CD4-positive, alpha-beta memory T cell (primary cell): ENCODE measurements at regions of chr16 and their contacts with region 1.

Region 1: GRCh38 chr16:71961066-71962039 is 38.8 kb downstream of the PKD1L3 start:
- DNase-seq: peak; percentile 69 to 75 (median 70)
- H3K4me3 ChIP-seq: no peak overlapping the region
- H3K4me3 Mint-ChIP-seq: no peak overlapping the region
- H3K27ac ChIP-seq: no peak overlapping the region
- H3K27ac Mint-ChIP-seq: peak overlapping the region in 1 of 7 donors; percentile 43
- H3K4me1 ChIP-seq: peaks cover 5% of the 10 kb centered on the region
- H3K4me1 Mint-ChIP-seq: peaks cover 5 to 9% (median 6%) of the 10 kb centered on the region in 4 donors
- H3K27me3 ChIP-seq: no peaks in the 10 kb centered on the region
- H3K27me3 Mint-ChIP-seq: peaks cover 0 to 3% of the 10 kb centered on the region in 2 donors

Region 2: GRCh38 chr16:71645453-71645852 is 315.9 kb before region 1 on chr16:
- CTCF ChIA-PET with region 1: no interaction called
- POLR2A ChIA-PET with region 1: no interaction called
- intact Hi-C with region 1: no loop called
- DNase-seq: no peak
- H3K4me3 ChIP-seq: no peak overlapping the region
- H3K4me3 Mint-ChIP-seq: no peak overlapping the region
- H3K27ac ChIP-seq: no peak overlapping the region
- H3K27ac Mint-ChIP-seq: no peak overlapping the region
- H3K4me1 ChIP-seq: no peaks in the 10 kb centered on the region
- H3K4me1 Mint-ChIP-seq: no peaks in the 10 kb centered on the region
- H3K27me3 ChIP-seq: no peaks in the 10 kb centered on the region
- H3K27me3 Mint-ChIP-seq: no peaks in the 10 kb centered on the region

Region 3: DNA sequence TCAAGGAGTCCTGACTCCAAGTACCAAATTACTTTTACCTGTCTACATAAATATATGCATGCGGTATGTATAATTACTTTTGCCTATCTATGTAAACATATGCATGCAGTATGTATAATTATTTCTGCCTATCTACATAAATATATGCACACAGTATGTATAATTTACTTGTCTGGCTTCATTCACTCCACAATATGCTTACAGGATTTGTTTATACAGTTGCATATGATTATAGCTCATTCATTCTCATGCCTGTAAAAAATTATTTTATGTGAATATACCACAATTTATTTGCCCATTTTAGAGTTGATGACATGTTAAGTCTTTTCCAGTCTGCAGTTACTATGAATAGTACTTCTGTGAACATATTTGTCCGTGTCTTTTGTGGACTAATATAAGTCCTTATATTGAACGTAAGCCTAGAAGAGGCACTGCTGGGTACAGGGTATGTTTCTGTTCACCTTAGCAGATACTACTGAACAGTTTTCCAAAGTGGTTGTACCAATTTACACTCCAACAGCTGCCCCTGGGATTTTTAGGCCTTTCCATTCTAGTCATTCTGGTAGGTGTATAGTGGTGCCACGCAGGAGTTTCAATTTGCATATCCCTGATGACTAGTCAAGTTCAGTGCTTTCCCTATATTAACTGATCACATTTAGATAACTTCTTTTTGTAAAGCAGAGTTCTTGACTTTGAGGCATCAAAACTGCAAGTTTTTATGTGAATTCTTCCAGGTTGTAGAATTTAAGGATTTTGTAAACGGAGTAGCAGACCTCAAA is 288.4 kb before region 1 on chr16:
- CTCF ChIA-PET with region 1: interaction called, 10 read pairs
- POLR2A ChIA-PET with region 1: no interaction called
- intact Hi-C with region 1: no loop called
- DNase-seq: no peak
- H3K4me3 ChIP-seq: no peak overlapping the region
- H3K4me3 Mint-ChIP-seq: no peak overlapping the region
- H3K27ac ChIP-seq: no peak overlapping the region
- H3K27ac Mint-ChIP-seq: no peak overlapping the region
- H3K4me1 ChIP-seq: no peaks in the 10 kb centered on the region
- H3K4me1 Mint-ChIP-seq: no peaks in the 10 kb centered on the region
- H3K27me3 ChIP-seq: no peaks in the 10 kb centered on the region
- H3K27me3 Mint-ChIP-seq: no peaks in the 10 kb centered on the region

Region 4: GRCh38 chr16:71746442-71747046 is 214.8 kb before region 1 on chr16:
- CTCF ChIA-PET with region 1: interaction called, 3 read pairs
- POLR2A ChIA-PET with region 1: no interaction called
- intact Hi-C with region 1: loop called (anchors 1 kb)
- DNase-seq: peak; percentile 36 to 50 (median 40)
- H3K4me3 ChIP-seq: no peak overlapping the region
- H3K4me3 Mint-ChIP-seq: no peak overlapping the region
- H3K27ac ChIP-seq: no peak overlapping the region
- H3K27ac Mint-ChIP-seq: peak overlapping the region in 3 of 7 donors; percentile 1 to 44 (median 15)
- H3K4me1 ChIP-seq: no peaks in the 10 kb centered on the region
- H3K4me1 Mint-ChIP-seq: peaks cover 0 to 6% (median 2%) of the 10 kb centered on the region in 4 donors
- H3K27me3 ChIP-seq: no peaks in the 10 kb centered on the region
- H3K27me3 Mint-ChIP-seq: no peaks in the 10 kb centered on the region

Region 5: DNA sequence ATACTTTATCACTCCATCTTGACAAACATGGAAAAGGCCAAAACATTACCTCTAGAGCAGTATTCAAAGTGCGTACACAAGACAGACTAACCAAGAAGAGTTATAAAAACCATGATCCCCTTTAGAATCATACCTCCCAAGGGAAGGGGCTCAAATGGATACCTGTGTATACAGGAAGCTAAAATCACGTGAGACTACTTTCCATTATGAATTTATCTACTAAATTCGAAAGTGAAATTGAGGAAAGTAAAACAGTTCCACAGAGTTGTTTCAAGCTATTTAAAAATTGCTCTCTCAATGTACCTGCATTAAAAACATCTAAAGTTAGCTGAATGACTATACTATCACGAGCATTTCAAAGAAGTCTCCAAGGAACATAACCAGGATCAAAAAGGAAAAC is 185.4 kb before region 1 on chr16:
- CTCF ChIA-PET with region 1: interaction called, 10 read pairs
- POLR2A ChIA-PET with region 1: no interaction called
- intact Hi-C with region 1: no loop called
- DNase-seq: no peak
- H3K4me3 ChIP-seq: no peak overlapping the region
- H3K4me3 Mint-ChIP-seq: peak overlapping the region in 2 of 8 donors; percentile 17 to 59
- H3K27ac ChIP-seq: no peak overlapping the region
- H3K27ac Mint-ChIP-seq: peak overlapping the region in 6 of 7 donors; percentile 28 to 82 (median 68)
- H3K4me1 ChIP-seq: peaks cover 27% of the 10 kb centered on the region
- H3K4me1 Mint-ChIP-seq: peaks cover 16 to 44% (median 28%) of the 10 kb centered on the region in 4 donors
- H3K27me3 ChIP-seq: no peaks in the 10 kb centered on the region
- H3K27me3 Mint-ChIP-seq: no peaks in the 10 kb centered on the region

Region 6: DNA sequence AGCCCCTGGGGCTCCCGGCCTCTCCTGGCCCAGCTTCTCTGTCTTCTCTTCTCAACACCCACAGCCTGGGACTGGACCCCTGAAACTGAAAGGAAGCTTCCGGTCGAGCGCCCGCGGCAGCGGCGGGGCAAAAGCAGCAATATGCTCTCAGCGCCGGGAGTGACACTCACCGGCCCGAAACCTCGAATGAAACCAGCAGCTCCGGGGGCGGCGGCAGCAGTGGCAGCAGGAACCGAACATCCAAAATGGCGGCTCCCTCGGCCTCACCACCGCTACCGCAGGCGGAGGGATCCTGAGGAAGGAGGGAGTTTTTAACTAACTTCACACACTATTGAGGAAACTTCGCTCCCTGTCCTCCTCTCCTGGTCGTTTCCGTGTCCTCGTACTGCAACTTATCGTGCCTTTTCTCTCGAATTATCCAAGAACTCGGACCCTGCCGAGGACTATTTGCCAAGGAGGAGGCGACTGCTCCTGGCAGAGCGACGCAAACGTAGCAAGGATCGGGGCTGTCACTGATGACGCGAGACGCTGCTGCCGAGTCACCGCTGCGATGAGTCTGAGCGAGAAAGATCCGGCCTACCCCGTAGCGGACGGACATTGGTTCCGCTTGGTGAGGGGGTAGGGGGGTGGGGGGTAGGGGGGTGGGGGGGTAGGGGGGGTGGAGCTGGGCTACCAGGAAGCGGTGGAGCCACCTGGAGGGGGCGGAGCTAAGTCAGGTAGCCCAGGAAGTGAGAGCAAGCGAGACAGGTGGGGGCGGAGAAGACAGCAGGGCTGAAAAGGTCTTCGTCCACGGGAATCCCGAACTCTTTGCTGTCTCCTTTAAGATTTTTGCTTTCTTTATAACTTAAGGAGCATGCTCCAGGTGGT is 152.5 kb before region 1 on chr16 and contains the start of gene AP1G1:
- CTCF ChIA-PET with region 1: no interaction called
- POLR2A ChIA-PET with region 1: interaction called, 5 read pairs
- intact Hi-C with region 1: loop called (anchors 1 kb)
- DNase-seq: peak; percentile 94 to 98 (median 97)
- H3K4me3 ChIP-seq: peak within 1 kb of the TSS; percentile 98 to 99
- H3K4me3 Mint-ChIP-seq: peak within 1 kb of the TSS; percentile 92 to 99 (median 98)
- H3K27ac ChIP-seq: peak within 1 kb of the TSS; percentile 100
- H3K27ac Mint-ChIP-seq: peak within 1 kb of the TSS; percentile 96 to 100 (median 100)
- H3K4me1 ChIP-seq: peaks cover 39% of the 10 kb centered on the region
- H3K4me1 Mint-ChIP-seq: peaks cover 19 to 55% (median 37%) of the 10 kb centered on the region in 4 donors
- H3K27me3 ChIP-seq: no peaks in the 10 kb centered on the region
- H3K27me3 Mint-ChIP-seq: peaks cover 0 to 2% of the 10 kb centered on the region in 2 donors
- total RNA-seq, gene AP1G1: 101 to 103 TPM

Region 7: GRCh38 chr16:71974068-71974818 is 12.9 kb after region 1 on chr16:
- CTCF ChIA-PET with region 1: interaction called, 27 read pairs
- POLR2A ChIA-PET with region 1: no interaction called
- intact Hi-C with region 1: no loop called
- DNase-seq: no peak
- H3K4me3 ChIP-seq: no peak overlapping the region
- H3K4me3 Mint-ChIP-seq: no peak overlapping the region
- H3K27ac ChIP-seq: no peak overlapping the region
- H3K27ac Mint-ChIP-seq: no peak overlapping the region
- H3K4me1 ChIP-seq: no peaks in the 10 kb centered on the region
- H3K4me1 Mint-ChIP-seq: no peaks in the 10 kb centered on the region
- H3K27me3 ChIP-seq: no peaks in the 10 kb centered on the region
- H3K27me3 Mint-ChIP-seq: peaks cover 0 to 2% of the 10 kb centered on the region in 2 donors